Activated CD4-positive, alpha-beta T cell treated with anti-CD3 and anti-CD28 coated beads for 36 hours (primary cell): ENCODE measurements at regions of chr14 and their contacts with region 1.

Region 1: DNA sequence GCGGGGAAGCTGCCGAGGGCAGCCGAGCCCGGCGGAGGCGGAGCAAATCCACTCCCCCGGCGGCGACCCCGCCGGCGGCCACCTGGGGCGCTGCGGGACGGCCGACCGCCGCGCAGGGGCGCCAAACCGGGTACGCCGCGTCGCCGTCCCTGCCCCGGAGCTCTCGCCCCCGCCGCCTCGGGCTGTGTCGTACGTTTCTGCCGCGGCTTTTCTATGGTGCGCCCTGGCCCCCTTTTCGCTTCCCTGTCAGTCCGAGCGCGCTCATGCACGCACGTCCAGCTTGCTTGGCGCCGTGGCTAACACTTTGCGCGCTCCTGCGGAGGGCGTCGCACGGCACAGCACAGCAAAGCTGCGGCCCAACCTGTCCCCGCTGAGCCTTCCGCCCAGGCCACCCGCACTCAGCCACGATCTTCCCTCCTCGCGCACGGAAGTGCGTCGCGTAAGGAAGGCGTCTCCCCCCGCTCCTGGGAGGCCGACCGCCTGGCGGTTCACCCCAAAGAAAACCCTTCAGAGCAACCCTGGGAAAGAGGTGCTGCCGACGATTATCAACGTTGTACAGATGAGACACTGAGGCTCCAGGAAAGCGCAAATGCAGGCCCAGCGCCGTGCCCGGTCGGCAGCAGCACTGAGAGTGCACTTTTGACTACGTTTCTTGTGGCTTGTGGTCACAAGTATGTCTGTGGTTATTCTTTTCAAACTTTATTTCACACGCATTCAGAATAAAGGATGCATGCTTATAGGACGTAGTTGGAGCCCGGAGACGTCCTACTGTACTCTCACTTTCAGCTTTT is at the start of gene HECTD1:
- DNase-seq: peak; percentile 94
- ATAC-seq: peak; percentile 77
- H3K4me3 Mint-ChIP-seq: peak within 1 kb of the TSS; percentile 85
- H3K27ac Mint-ChIP-seq: peak within 1 kb of the TSS; percentile 99
- H3K4me1 Mint-ChIP-seq: peaks cover 38% of the 10 kb centered on the region
- H3K27me3 Mint-ChIP-seq: no peaks in the 10 kb centered on the region
- total RNA-seq, gene HECTD1: 87.1 to 89.5 TPM

Region 2: GRCh38 chr14:30558675-30559555 is 649.0 kb before region 1 on chr14 and contains the start of gene G2E3:
- CTCF ChIA-PET with region 1: no interaction called
- POLR2A ChIA-PET with region 1: no interaction called
- intact Hi-C with region 1: loop called in 1 of 2 experiments (anchors 2 kb)
- DNase-seq: peak; percentile 93
- ATAC-seq: peak; percentile 99
- H3K4me3 Mint-ChIP-seq: peak within 1 kb of the TSS; percentile 100
- H3K27ac Mint-ChIP-seq: peak within 1 kb of the TSS; percentile 100
- H3K4me1 Mint-ChIP-seq: peaks cover 33% of the 10 kb centered on the region
- H3K27me3 Mint-ChIP-seq: peaks cover 2% of the 10 kb centered on the region
- total RNA-seq, gene G2E3: 16.9 to 29.6 TPM

Region 3: GRCh38 chr14:31026395-31027118 is 181.4 kb before region 1 on chr14:
- CTCF ChIA-PET with region 1: interaction called, 3 read pairs
- POLR2A ChIA-PET with region 1: interaction called, 4 read pairs
- intact Hi-C with region 1: loop called (anchors 1 kb)
- DNase-seq: peak; percentile 95
- ATAC-seq: peak; percentile 91
- H3K4me3 Mint-ChIP-seq: peak overlapping the region; percentile 83
- H3K27ac Mint-ChIP-seq: peak overlapping the region; percentile 90
- H3K4me1 Mint-ChIP-seq: peaks cover 55% of the 10 kb centered on the region
- H3K27me3 Mint-ChIP-seq: no peaks in the 10 kb centered on the region

Region 4: GRCh38 chr14:31270196-31270772 is 62.3 kb after region 1 on chr14:
- CTCF ChIA-PET with region 1: interaction called, 7 read pairs
- POLR2A ChIA-PET with region 1: interaction called, 7 read pairs
- intact Hi-C with region 1: loop called (anchors 1 kb)
- DNase-seq: peak; percentile 58
- ATAC-seq: no peak
- H3K4me3 Mint-ChIP-seq: no peak overlapping the region
- H3K27ac Mint-ChIP-seq: no peak overlapping the region
- H3K4me1 Mint-ChIP-seq: peaks cover 10% of the 10 kb centered on the region
- H3K27me3 Mint-ChIP-seq: no peaks in the 10 kb centered on the region

Region 5: DNA sequence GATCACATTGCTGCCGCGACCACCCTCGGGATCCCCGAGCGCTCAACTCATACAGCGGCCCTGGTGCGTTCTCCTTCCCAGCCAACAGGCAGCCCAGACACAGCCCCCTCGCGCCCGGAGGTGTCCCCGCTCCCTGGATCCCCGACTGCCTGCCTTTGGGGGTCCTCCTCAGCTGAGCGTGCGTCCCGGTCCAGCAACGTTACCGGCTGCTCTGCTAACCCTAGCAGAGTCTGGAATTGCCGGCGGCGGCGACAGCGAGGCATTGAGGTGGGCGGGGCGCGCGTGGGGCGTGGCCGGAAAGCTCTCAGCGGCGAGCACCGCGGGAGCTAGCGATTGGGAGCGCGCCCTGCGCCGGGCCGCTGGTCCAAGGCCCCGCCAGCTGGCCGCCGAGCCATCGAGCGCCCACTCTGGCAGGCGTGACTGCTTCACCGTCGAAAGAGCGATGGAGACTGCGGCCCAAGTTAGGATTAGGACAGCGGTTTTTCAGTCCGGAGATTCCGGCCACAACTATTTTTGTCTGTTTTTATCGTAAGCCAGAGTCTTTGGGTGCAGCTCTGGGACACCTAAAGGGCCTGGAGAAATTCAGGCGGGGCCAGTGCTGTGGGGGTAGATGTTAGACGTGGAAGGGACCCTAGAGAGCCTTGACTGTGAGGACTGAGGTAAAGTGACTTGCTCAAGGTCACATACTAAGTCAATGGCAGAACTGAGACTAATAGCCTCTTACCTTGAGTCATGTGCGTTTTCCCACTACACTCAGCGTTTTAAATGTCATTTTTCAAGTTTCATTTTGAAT is 212.6 kb after region 1 on chr14 and contains the start of gene HEATR5A:
- CTCF ChIA-PET with region 1: interaction called, 4 read pairs
- POLR2A ChIA-PET with region 1: interaction called, 5 read pairs
- intact Hi-C with region 1: loop called (anchors 1 to 10 kb)
- DNase-seq: peak; percentile 94
- ATAC-seq: peak; percentile 91
- H3K4me3 Mint-ChIP-seq: peak within 1 kb of the TSS; percentile 94
- H3K27ac Mint-ChIP-seq: peak within 1 kb of the TSS; percentile 88
- H3K4me1 Mint-ChIP-seq: peaks cover 25% of the 10 kb centered on the region
- H3K27me3 Mint-ChIP-seq: peaks cover 3% of the 10 kb centered on the region
- total RNA-seq, gene HEATR5A: 8.5 to 9.4 TPM

Region 6: DNA sequence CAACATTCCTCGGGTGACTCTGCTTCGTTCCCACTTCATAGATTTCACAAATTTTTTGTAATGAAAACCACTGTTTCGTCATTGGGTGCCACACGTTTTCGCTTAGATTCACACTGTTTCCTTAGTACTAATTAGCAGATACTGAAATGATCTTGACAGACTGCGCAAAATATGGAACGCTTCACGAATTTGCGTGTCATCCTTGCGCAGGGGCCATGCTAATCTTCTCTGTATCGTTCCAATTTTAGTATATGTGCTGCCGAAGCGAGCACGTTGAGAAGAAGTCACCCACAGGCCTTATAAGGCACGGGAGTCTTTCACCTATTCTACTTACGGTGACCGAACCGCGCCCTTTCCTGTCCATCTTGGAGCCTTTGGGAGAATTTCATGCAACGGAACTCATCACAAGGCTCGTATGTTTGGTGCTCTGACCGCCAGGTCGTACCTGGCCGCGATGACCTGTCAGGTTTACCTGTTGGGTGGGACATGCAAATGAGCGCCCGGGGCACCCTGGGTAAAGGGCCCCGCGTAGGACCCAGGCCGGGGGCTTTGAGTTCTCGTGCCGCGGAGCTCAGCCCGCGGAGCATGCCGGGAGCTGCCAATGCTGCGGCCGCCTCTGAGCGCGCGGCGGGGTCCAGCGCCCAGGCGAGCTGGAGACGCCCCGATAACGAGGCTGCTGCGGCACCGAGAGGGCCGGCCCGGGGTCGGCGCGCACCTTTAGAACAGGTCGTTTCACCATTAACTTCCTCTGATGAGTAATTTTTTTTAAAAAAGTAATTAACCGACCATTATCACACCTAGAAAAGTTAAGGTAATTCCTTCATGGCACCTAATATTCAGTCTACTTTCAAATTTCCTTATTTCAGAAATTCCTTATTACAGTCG is 995.3 kb after region 1 on chr14 and contains the start of gene RNU6-8:
- CTCF ChIA-PET with region 1: no interaction called
- POLR2A ChIA-PET with region 1: no interaction called
- intact Hi-C with region 1: loop called in 1 of 2 experiments (anchors 1 kb)
- DNase-seq: peak; percentile 90
- ATAC-seq: peak; percentile 86
- H3K4me3 Mint-ChIP-seq: peak within 1 kb of the TSS; percentile 87
- H3K27ac Mint-ChIP-seq: peak within 1 kb of the TSS; percentile 100
- H3K4me1 Mint-ChIP-seq: peaks cover 48% of the 10 kb centered on the region
- H3K27me3 Mint-ChIP-seq: peaks cover 3% of the 10 kb centered on the region
- total RNA-seq, gene RNU6-8: not detected